MCF 10A (cell line): ENCODE measurements at regions of chr6 and their contacts with region 1.

Region 1: DNA sequence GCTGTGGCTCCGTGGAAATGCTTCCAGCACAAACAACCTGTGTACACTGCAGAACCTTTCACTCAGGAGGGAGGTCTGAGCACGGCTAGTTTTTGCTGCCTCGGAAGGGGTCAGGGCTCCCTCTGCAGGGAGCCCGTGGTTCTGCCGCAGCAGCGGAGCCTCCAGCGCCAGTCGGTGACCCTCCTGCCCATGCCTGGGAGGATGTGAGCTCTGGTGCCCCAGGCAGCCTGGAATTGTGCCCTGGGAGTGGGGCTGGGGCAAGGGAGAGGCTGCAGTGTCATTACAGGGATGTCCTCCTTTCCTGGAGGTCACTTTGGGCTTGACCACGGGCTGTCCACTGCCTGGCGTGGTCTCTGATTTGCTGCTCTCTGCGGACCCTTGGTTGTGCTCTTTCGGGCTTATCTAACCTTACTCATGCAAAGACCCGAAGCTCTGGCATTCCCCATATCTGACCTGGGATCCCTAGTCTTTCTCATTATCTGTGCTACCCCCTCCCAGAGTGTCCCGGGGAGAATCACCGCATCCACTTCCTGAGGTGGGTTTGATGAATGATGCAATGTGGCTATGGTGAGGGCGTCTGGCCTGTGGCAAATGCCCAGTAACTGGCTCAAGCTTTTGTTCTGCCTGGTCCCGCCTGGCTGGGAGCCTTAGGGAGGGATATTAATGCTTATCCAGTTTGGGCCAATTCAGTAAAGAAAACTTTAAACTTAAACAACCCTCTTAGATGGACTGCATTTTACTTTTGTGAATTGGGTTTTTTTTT is 59.6 kb upstream of the TAGAP start:
- DNase-seq: peak; percentile 61
- H3K4me3 Mint-ChIP-seq: no peak overlapping the region
- H3K27ac Mint-ChIP-seq: no peak overlapping the region
- H3K4me1 Mint-ChIP-seq: peaks cover 6% of the 10 kb centered on the region
- H3K27me3 Mint-ChIP-seq: peaks cover 16% of the 10 kb centered on the region
- CTCF ChIP-seq: peak; percentile 93

Region 2: DNA sequence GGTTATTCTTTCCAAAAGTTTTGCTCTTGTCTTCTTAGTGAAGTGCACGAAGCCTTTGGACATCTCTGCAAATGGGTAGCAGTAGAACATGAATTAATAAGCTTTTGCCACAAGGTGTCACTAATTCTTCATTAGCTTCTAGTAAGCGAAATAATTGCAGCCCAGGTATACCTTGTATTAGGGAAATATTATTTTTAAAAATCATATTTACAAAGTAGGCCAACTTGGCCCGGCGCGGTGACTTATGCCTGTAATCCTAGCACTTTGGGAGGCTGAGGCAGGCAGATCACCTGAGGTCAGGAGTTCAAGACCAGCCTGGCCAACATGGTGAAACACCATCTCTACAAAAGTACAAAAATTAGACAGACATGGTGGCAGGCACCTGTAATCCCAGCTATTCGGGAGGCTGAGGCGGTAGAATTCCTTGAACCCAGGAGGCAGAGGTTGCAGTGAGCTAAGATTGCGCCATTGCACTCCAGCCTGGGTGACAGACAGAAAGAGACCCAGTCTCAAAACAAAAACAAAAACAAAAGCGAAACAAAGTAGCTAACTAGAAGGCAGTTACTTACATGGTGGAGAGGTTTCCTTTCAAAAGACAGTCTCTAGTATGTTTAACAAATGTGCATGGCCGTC is 95.6 kb before region 1 on chr6:
- CTCF ChIA-PET with region 1: interaction called, 46 read pairs
- POLR2A ChIA-PET with region 1: interaction called, 3 read pairs
- intact Hi-C with region 1: loop called (anchors 1 kb)
- DNase-seq: peak; percentile 53
- H3K4me3 Mint-ChIP-seq: no peak overlapping the region
- H3K27ac Mint-ChIP-seq: no peak overlapping the region
- H3K4me1 Mint-ChIP-seq: no peaks in the 10 kb centered on the region
- H3K27me3 Mint-ChIP-seq: no peaks in the 10 kb centered on the region
- CTCF ChIP-seq: peak; percentile 42

Region 3: GRCh38 chr6:159017757-159018559 is 86.4 kb before region 1 on chr6:
- CTCF ChIA-PET with region 1: interaction called, 10 read pairs
- POLR2A ChIA-PET with region 1: no interaction called
- intact Hi-C with region 1: no loop called
- DNase-seq: no peak
- H3K4me3 Mint-ChIP-seq: no peak overlapping the region
- H3K27ac Mint-ChIP-seq: no peak overlapping the region
- H3K4me1 Mint-ChIP-seq: no peaks in the 10 kb centered on the region
- H3K27me3 Mint-ChIP-seq: no peaks in the 10 kb centered on the region
- CTCF ChIP-seq: no peak

Region 4: GRCh38 chr6:159042003-159042825 is 62.1 kb before region 1 on chr6:
- CTCF ChIA-PET with region 1: interaction called, 73 read pairs
- POLR2A ChIA-PET with region 1: interaction called, 9 read pairs
- intact Hi-C with region 1: loop called (anchors 1 kb)
- DNase-seq: peak; percentile 85
- H3K4me3 Mint-ChIP-seq: no peak overlapping the region
- H3K27ac Mint-ChIP-seq: no peak overlapping the region
- H3K4me1 Mint-ChIP-seq: peaks cover 21% of the 10 kb centered on the region
- H3K27me3 Mint-ChIP-seq: peaks cover 19% of the 10 kb centered on the region
- CTCF ChIP-seq: peak; percentile 81

Region 5: GRCh38 chr6:159053781-159054398 is 50.5 kb before region 1 on chr6:
- CTCF ChIA-PET with region 1: interaction called, 16 read pairs
- POLR2A ChIA-PET with region 1: no interaction called
- intact Hi-C with region 1: no loop called
- DNase-seq: no peak
- H3K4me3 Mint-ChIP-seq: no peak overlapping the region
- H3K27ac Mint-ChIP-seq: no peak overlapping the region
- H3K4me1 Mint-ChIP-seq: no peaks in the 10 kb centered on the region
- H3K27me3 Mint-ChIP-seq: peaks cover 42% of the 10 kb centered on the region
- CTCF ChIP-seq: no peak

Region 6: DNA sequence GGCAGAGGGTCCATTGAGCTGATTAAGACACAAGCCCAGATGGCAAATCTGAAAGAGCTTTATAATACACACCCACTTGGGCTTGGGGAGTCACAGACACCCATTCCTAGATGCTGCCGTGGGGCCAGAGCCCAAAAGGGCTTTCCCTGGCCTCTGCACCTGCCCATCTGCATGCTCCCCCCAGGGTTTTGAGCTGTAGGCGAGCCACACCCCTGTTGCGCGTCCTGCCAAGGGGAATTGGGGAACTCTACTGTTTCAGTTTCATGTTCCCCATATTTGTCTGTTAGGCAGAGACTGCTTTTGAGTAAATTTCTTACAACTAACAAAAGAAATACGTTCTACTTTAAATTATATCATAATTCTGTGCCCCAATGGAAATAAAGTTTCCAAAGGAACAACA is 12.0 kb after region 1 on chr6:
- CTCF ChIA-PET with region 1: interaction called, 22 read pairs
- POLR2A ChIA-PET with region 1: interaction called, 7 read pairs
- intact Hi-C with region 1: no loop called
- DNase-seq: no peak
- H3K4me3 Mint-ChIP-seq: no peak overlapping the region
- H3K27ac Mint-ChIP-seq: no peak overlapping the region
- H3K4me1 Mint-ChIP-seq: no peaks in the 10 kb centered on the region
- H3K27me3 Mint-ChIP-seq: no peaks in the 10 kb centered on the region
- CTCF ChIP-seq: no peak

Region 7: DNA sequence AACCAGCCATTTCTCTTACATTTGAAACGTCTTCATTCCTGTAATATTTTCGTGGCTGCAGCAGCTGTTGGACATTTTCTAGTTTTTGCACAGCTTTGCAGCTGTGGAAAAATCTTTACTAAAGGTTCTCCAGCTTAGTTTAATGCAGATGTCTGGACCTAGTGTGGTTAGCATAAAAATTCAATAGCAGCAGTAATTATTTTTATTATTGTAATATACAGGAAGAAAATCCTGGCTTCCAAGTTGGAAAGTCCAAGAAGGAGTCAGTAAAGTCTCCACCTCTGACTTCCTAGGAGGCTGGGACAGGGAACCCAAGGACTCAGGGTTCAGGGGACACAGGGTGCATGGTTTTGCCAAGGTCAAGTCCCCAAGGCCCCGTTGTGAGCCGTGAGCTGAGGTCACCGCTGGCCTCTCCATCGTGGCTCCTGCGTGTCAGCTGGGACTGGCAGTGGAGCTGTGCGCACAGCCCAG is 295.4 kb after region 1 on chr6:
- CTCF ChIA-PET with region 1: no interaction called
- POLR2A ChIA-PET with region 1: no interaction called
- intact Hi-C with region 1: no loop called
- DNase-seq: no peak
- H3K4me3 Mint-ChIP-seq: no peak overlapping the region
- H3K27ac Mint-ChIP-seq: no peak overlapping the region
- H3K4me1 Mint-ChIP-seq: no peaks in the 10 kb centered on the region
- H3K27me3 Mint-ChIP-seq: peaks cover 3% of the 10 kb centered on the region
- CTCF ChIP-seq: no peak